Activated naive CD4-positive, alpha-beta T cell treated with anti-CD3 and anti-CD28 coated beads for 36 hours (primary cell): ENCODE measurements at regions of chr17 and their contacts with region 1.

Region 1: DNA sequence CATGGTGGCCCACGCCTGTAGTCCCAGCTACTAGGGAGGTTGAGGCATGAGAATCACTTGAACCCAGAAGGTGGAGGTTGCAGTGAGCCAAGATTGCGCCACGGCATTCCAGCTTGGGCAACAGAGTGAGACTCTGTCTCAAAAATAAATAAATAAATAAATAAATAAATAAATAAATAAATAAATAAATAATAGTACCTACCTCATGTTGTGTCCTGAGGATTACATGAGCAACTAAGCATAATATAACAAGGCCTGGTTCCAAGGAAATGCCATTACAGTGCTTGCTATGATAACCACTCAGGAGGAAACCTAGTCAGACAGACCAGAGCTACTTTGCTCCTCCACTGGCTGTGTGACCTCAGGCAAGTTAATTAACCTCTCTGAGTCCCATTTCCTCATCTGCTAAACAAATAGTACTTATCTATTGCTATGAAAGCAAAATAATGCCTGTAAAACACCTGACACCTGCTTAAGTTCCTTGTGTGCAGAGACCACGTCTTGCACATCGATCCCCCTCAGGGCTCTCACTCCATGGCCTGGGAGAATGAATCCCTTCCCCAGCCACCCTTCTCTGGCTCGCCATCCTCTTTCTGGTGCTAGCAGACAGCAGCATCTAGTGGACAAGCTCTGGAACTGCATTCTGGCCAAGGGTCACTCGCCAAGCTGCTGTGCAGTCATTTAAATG is 7.5 kb downstream of the EPOP start:
- DNase-seq: peak; percentile 71
- H3K4me3 Mint-ChIP-seq: no peak overlapping the region
- H3K27ac Mint-ChIP-seq: no peak overlapping the region
- H3K4me1 Mint-ChIP-seq: peaks cover 15% of the 10 kb centered on the region
- H3K27me3 Mint-ChIP-seq: peaks cover 46% of the 10 kb centered on the region

Region 2: GRCh38 chr17:38509008-38509771 is 158.1 kb before region 1 on chr17:
- CTCF ChIA-PET with region 1: interaction called, 14 read pairs
- intact Hi-C with region 1: no loop called
- DNase-seq: peak; percentile 87
- H3K4me3 Mint-ChIP-seq: peak overlapping the region; percentile 78
- H3K27ac Mint-ChIP-seq: peak overlapping the region; percentile 56
- H3K4me1 Mint-ChIP-seq: peaks cover 10% of the 10 kb centered on the region
- H3K27me3 Mint-ChIP-seq: peaks cover 34% of the 10 kb centered on the region

Region 3: DNA sequence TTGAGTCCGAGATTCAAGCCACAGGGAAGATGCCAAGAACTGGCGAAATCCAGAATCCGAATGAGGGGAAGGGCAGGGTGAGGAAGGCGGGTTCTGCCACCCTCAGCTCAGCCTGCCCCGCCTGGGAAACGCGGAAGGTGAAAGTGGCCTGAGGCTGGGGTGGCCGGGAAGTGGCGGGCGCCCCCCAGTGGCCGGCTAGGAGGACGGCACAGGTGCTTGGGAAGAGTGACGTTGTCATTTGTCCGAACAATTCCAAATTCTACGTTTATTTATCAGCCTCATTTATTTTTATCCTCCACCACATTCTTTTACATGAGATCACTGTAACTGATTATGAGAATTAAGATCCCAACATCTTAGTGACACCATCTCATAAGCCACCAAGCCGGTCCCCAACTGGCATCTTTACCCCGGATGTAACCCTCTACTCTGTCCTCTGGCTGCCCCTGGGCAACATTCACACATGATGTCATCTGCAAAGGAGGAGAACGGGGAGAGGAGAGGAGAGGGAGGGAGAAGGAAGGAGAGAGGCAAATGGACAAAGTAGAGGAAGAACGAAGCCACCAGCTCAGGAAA is 82.8 kb before region 1 on chr17:
- CTCF ChIA-PET with region 1: interaction called, 18 read pairs
- intact Hi-C with region 1: no loop called
- DNase-seq: peak; percentile 71
- H3K4me3 Mint-ChIP-seq: no peak overlapping the region
- H3K27ac Mint-ChIP-seq: no peak overlapping the region
- H3K4me1 Mint-ChIP-seq: peaks cover 4% of the 10 kb centered on the region
- H3K27me3 Mint-ChIP-seq: peaks cover 57% of the 10 kb centered on the region

Region 4: GRCh38 chr17:38595892-38596291 is 71.4 kb before region 1 on chr17:
- CTCF ChIA-PET with region 1: no interaction called
- intact Hi-C with region 1: no loop called
- DNase-seq: no peak
- H3K4me3 Mint-ChIP-seq: no peak overlapping the region
- H3K27ac Mint-ChIP-seq: no peak overlapping the region
- H3K4me1 Mint-ChIP-seq: peaks cover 17% of the 10 kb centered on the region
- H3K27me3 Mint-ChIP-seq: peaks cover 79% of the 10 kb centered on the region

Region 5: DNA sequence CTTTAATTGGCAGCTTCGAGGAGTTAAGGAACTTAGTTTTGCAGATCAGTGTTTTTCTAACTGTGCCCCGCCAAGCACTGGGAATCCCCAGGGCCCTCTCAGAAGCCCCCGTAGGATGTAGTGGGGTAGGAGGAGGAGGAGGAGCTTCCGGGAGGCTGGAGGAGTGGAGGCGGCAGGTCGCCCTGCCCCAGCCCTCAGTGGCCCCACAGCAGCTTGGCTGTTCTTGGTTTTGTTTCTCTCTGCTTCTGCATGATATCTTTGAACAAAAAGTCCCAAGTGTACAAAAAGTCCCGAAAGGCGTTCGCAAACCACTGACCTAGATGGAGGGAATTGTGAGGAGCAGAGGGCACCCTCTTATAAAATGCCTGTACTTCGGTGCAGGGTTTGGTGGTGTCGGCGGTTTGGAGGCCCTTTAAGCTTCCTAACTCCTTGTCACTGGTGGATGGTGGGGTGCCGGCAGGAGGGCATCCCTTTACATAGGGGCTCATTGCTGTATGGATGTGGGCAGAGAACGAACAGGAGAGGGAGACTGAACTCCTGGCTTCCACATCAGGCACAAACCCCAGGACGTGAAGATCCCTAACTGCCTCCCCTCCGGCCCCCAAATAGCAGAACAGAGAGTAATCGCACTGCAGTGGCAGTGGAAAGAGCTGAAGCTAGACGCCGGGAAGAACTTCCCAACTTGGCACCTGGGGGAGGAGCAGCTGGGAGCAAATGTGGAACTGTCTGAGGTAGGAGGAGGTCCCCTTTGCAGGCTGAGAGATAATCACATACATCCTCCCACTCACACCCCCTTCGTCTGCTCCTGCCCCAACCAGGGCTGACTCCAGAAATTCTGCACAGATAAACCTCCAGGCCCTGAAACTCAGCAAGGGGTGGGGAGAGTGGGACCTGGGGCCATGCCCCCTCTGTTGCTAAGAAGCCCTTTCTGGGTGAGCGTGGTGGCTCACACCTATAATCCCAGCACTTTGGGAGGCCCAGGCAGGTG is 12.5 kb before region 1 on chr17:
- CTCF ChIA-PET with region 1: interaction called, 17 read pairs
- intact Hi-C with region 1: no loop called
- DNase-seq: no peak
- H3K4me3 Mint-ChIP-seq: no peak overlapping the region
- H3K27ac Mint-ChIP-seq: no peak overlapping the region
- H3K4me1 Mint-ChIP-seq: peaks cover 17% of the 10 kb centered on the region
- H3K27me3 Mint-ChIP-seq: peaks cover 27% of the 10 kb centered on the region

Region 6: GRCh38 chr17:38824899-38825761 is 157.9 kb after region 1 on chr17 and contains the start of gene CWC25:
- CTCF ChIA-PET with region 1: no interaction called
- intact Hi-C with region 1: no loop called
- DNase-seq: peak; percentile 95
- H3K4me3 Mint-ChIP-seq: peak within 1 kb of the TSS; percentile 91
- H3K27ac Mint-ChIP-seq: peak within 1 kb of the TSS; percentile 99
- H3K4me1 Mint-ChIP-seq: peaks cover 29% of the 10 kb centered on the region
- H3K27me3 Mint-ChIP-seq: no peaks in the 10 kb centered on the region
- total RNA-seq, gene CWC25: 18.6 to 21.9 TPM

Region 7: GRCh38 chr17:38922538-38923297 is 255.5 kb after region 1 on chr17:
- CTCF ChIA-PET with region 1: no interaction called
- intact Hi-C with region 1: no loop called
- DNase-seq: no peak
- H3K4me3 Mint-ChIP-seq: no peak overlapping the region
- H3K27ac Mint-ChIP-seq: no peak overlapping the region
- H3K4me1 Mint-ChIP-seq: peaks cover 36% of the 10 kb centered on the region
- H3K27me3 Mint-ChIP-seq: no peaks in the 10 kb centered on the region